Panc1 (cell line): ENCODE measurements at regions of chr18 and their contacts with region 1.

Region 1: GRCh38 chr18:56748698-56749268 is 97.6 kb downstream of the WDR7 start:
- DNase-seq: no peak
- ATAC-seq: no peak
- H3K4me3 ChIP-seq: no peak overlapping the region
- H3K27ac ChIP-seq: no peak overlapping the region
- H3K4me1 ChIP-seq: no peaks in the 10 kb centered on the region
- H3K27me3 ChIP-seq: no peaks in the 10 kb centered on the region
- CTCF ChIP-seq: peak; percentile 44; the same call in 1 of the 2 replicates

Region 2: DNA sequence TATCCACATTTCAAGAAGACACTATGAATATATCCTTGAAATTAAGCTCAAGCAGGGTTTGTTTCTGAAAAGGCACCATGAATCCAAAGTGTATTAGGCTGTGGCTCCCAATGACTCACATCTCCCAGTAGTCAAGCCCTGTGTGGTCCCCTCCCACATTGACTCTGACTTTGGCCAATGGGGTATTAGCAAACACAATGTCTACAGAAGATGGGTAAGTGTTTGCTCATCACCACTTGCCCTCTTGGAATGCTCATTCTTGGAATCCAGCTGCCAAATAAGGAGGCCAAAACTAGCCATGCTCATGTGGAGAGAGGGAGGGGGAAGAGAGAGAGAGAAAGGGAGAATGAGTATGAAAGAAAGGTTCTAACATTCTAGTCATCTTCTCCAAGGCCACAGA is 600.4 kb before region 1 on chr18:
- CTCF ChIA-PET with region 1: no interaction called
- POLR2A ChIA-PET with region 1: no interaction called
- in situ Hi-C with region 1: no loop called
- intact Hi-C with region 1: no loop called
- DNase-seq: no peak
- ATAC-seq: no peak
- H3K4me3 ChIP-seq: no peak overlapping the region
- H3K27ac ChIP-seq: no peak overlapping the region
- H3K4me1 ChIP-seq: no peaks in the 10 kb centered on the region
- H3K27me3 ChIP-seq: no peaks in the 10 kb centered on the region
- CTCF ChIP-seq: no peak

Region 3: DNA sequence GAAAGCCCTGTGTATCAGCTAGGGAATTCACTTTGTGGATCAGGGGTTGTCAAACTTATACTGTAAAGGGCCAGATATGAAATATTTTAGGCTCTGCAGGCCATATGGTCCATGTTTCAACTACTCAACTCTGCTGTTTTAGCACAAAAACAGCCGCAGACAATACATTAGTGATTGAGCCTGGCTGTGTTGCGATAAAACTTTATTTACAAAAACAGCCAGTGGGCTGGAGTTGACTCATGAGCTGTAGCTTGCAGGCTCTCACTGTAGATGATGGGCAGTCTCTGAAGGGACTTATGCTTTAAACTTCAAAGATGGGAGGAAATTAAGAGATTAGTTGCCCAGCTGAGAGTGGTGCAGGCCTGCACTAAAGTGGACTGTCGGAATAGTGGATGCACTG is 64.5 kb before region 1 on chr18:
- CTCF ChIA-PET with region 1: no interaction called
- POLR2A ChIA-PET with region 1: no interaction called
- in situ Hi-C with region 1: no loop called
- intact Hi-C with region 1: no loop called
- DNase-seq: no peak
- ATAC-seq: no peak
- H3K4me3 ChIP-seq: no peak overlapping the region
- H3K27ac ChIP-seq: no peak overlapping the region
- H3K4me1 ChIP-seq: no peaks in the 10 kb centered on the region
- H3K27me3 ChIP-seq: no peaks in the 10 kb centered on the region
- CTCF ChIP-seq: no peak

Region 4: DNA sequence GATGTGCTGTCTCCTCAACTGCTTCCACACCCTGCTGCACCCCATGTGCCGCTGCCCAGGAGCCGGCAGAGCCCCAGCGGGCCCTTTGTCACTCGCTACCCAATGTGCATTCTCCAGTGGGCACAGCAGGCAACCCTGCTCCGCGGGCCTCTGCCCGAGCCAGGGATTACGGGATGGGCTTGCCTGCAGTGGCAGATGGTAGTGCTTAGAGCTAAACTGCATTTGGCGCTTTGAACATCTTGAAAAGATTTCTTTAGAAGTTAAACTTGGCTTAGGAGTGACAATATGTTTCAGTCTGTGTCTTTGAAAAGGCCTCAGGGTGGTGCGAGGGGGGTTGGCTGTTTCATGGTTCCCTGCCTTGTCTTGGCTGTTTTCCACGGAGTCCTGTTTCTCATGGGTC is 314.1 kb after region 1 on chr18:
- CTCF ChIA-PET with region 1: no interaction called
- POLR2A ChIA-PET with region 1: no interaction called
- in situ Hi-C with region 1: no loop called
- intact Hi-C with region 1: no loop called
- DNase-seq: no peak
- ATAC-seq: no peak
- H3K4me3 ChIP-seq: no peak overlapping the region
- H3K27ac ChIP-seq: no peak overlapping the region
- H3K4me1 ChIP-seq: no peaks in the 10 kb centered on the region
- H3K27me3 ChIP-seq: no peaks in the 10 kb centered on the region
- CTCF ChIP-seq: no peak

Region 5: DNA sequence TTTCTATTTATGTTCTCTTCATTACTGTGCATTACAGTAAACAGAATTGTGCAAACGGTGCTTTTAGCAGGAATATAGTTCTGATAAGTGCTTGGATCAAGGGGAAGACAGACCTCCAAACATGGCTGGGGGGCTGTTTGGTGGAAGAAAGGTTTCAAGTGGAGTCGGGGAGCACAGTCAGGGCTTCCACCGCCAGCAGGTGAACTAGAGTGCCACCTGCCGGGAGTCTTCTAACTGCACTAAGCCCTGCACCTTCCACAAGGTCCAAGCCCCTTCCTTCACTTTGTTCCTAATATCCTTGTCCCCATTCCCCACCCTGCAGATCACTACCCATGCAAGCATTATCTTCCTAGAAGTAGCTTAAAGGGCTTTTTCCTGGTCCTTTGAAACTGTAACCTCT is 697.5 kb after region 1 on chr18:
- CTCF ChIA-PET with region 1: no interaction called
- POLR2A ChIA-PET with region 1: no interaction called
- in situ Hi-C with region 1: no loop called
- intact Hi-C with region 1: loop called (anchors 5 kb)
- DNase-seq: no peak
- ATAC-seq: peak; percentile 83
- H3K4me3 ChIP-seq: no peak overlapping the region
- H3K27ac ChIP-seq: no peak overlapping the region
- H3K4me1 ChIP-seq: no peaks in the 10 kb centered on the region
- H3K27me3 ChIP-seq: no peaks in the 10 kb centered on the region
- CTCF ChIP-seq: peak; percentile 77

Region 6: DNA sequence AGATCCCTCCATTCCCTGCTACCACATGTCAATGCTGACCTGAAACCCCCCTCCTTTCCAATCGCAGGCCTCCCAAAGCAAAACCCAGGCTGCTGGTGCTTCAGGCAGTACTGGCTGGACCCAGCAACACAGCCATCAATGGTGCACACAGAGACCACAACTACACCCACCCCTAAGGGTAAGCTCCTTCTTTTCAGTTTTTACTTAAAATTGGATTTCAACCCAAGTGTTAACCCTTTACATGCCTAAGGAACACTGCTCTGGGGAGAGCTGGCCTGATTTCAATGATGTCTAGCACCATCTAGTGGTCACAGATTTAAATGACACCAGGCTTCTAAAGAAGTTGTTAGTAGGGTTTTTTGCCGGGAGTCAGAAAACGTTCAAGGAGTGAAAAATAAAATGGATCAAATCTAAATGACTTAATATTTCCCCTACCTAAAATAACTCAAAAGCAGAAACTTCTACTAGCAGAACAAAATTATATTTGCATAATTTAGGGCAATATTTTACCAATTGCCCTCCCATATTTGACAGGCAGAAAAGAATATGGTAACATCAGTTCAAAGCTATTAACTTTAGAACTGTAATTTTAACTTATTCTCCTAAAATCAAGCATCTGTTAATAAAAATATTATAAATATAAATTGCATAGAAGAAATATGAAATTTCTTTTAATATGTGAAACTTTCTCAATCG is 813.1 kb after region 1 on chr18:
- CTCF ChIA-PET with region 1: no interaction called
- POLR2A ChIA-PET with region 1: no interaction called
- in situ Hi-C with region 1: no loop called
- intact Hi-C with region 1: loop called (anchors 2 kb)
- DNase-seq: no peak
- ATAC-seq: 0 out of 2 replicates have a peak, but pooled peaks have one; percentile 38
- H3K4me3 ChIP-seq: no peak overlapping the region
- H3K27ac ChIP-seq: no peak overlapping the region
- H3K4me1 ChIP-seq: no peaks in the 10 kb centered on the region
- H3K27me3 ChIP-seq: no peaks in the 10 kb centered on the region
- CTCF ChIP-seq: peak; percentile 72